ENCODE measurements at regions of chr12 and their contacts with region 1.

Region 1: GRCh38 chr12:2812290-2813213 is at the start of gene ITFG2:
- DNase-seq: peak; percentile 83 to 99 (median 96)
- ATAC-seq: peak; percentile 91 to 93
- H3K4me3 Mint-ChIP-seq: peak within 1 kb of the TSS; percentile 94 to 100 (median 100)
- H3K27ac Mint-ChIP-seq: peak within 1 kb of the TSS; percentile 96 to 100 (median 100)
- H3K4me1 Mint-ChIP-seq: peaks cover 12 to 44% (median 35%) of the 10 kb centered on the region in 4 donors
- H3K27me3 Mint-ChIP-seq: no peaks in the 10 kb centered on the region
- polyA plus RNA-seq, gene ITFG2: 50.2 to 59.2 (median 50.7) TPM

Region 2: DNA sequence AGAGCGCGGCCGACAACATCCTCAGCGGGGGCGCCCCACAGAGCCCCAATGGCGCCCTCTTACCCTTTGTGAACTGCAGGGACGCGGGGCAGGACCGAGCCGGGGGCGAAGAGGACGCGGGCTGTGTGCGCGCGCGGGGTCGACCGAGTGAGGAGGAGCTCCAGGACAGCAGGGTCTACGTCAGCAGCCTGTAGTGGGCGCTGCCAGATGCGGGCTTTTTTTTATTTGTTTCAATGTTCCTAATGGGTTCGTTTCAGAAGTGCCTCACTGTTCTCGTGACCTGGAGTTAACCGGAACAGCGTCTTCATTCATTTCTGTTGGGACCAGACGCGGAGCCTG is 121.6 kb before region 1 on chr12:
- POLR2A ChIA-PET with region 1: interaction called, 20 read pairs
- DNase-seq: peak; percentile 32 to 80 (median 60)
- ATAC-seq: peak; percentile 76 to 78
- H3K4me3 Mint-ChIP-seq: peak overlapping the region; percentile 86 to 99 (median 94)
- H3K27ac Mint-ChIP-seq: peak overlapping the region; percentile 81 to 94 (median 90)
- H3K4me1 Mint-ChIP-seq: peaks cover 36 to 55% (median 50%) of the 10 kb centered on the region in 4 donors
- H3K27me3 Mint-ChIP-seq: no peaks in the 10 kb centered on the region

Region 3: GRCh38 chr12:2794736-2795289 is 17.7 kb before region 1 on chr12 and contains the start of gene FKBP4:
- POLR2A ChIA-PET with region 1: interaction called, 94 read pairs
- DNase-seq: peak; percentile 71 to 93 (median 87)
- ATAC-seq: peak; percentile 82 to 89
- H3K4me3 Mint-ChIP-seq: peak within 1 kb of the TSS; percentile 84 to 96 (median 91)
- H3K27ac Mint-ChIP-seq: peak within 1 kb of the TSS in 9 of 10 donors; percentile 57 to 93 (median 88)
- H3K4me1 Mint-ChIP-seq: peaks cover 10 to 36% (median 20%) of the 10 kb centered on the region in 4 donors
- H3K27me3 Mint-ChIP-seq: no peaks in the 10 kb centered on the region
- polyA plus RNA-seq, gene FKBP4: 30.3 to 41.5 (median 33.9) TPM

Measured in naive thymus-derived CD8-positive, alpha-beta T cell (primary cell).